BJ (cell line): ENCODE measurements at regions of chr15 and their contacts with region 1.

Region 1: DNA sequence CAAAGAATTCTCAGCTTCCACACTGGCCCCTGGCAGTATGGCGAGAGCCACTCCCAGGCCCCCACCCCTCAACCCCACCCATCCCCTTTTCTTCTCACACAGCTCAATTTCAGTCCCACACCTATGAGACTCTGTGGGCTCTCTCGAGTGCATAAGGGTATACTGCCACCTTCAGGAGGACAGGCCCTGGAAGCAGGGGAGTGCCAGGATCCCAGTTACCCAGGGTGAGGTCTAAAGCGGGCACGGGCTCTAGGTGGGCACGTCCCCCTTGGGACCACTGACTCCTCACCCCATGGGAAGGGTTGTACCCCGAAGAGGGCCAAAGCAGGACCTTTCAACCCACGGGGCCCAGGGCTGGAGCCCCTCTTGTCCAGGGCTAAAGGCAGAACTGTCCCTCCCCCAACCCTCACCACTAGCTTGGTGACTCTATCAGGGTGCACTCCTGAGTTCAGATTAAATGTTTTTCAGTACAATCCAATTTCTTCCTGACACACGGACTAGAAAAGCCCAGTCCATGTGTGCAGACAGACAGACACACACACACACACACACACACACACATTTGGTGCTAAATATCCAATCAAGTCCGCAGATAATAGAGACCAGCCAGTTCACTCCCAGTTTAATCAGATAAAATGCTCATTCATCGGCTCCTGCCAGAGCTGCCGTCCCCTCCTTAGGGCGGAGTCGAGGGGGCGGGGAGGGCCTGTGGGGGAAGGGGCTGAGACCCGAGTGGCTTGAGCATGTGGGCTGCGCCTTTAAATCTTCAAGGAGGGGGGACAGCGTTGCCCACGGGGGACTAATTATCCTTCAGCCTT is 59.4 kb downstream of the CYP11A1 start:
- DNase-seq: no peak
- H3K4me3 ChIP-seq: no peak overlapping the region
- H3K27me3 ChIP-seq: peaks cover 22% of the 10 kb centered on the region
- CTCF ChIP-seq: peak; percentile 91

Region 2: DNA sequence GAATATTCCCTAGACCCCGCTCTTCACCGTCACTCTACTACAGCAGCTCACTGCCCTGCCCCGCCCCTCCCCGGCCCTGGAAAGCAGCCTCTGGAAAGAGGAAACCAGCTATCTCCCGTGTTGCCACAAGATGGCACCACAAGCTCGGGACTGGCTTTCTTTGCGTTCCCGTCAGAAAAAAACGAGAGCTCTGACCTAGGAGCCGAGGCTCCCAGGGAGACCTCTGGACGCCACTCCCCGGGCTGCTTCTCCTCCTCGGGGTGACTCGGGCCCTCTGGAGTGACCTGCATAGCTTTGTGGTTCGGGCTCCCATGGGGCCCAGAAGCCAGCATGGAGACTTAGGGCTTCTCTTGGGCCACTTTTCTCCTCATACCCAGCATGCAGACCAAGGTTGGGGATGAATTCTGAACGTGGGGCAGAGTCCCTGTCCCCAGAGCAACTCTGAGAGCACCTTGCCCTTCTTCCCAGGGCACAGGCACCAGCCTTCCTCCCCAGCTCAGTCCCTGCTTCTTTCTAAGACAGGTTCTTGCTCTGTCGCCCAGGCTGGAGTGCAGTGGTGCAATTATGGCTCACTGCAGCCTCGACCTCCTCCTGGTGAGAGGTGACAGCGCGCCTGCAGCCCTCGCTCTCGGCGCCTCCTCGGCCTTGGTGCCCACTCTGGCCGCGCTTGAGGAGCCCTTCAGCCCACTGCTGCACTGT is 334.9 kb before region 1 on chr15:
- CTCF ChIA-PET with region 1: interaction called, 13 read pairs
- POLR2A ChIA-PET with region 1: no interaction called
- DNase-seq: no peak
- H3K4me3 ChIP-seq: no peak overlapping the region
- H3K27me3 ChIP-seq: no peaks in the 10 kb centered on the region
- CTCF ChIP-seq: peak; percentile 94

Region 3: DNA sequence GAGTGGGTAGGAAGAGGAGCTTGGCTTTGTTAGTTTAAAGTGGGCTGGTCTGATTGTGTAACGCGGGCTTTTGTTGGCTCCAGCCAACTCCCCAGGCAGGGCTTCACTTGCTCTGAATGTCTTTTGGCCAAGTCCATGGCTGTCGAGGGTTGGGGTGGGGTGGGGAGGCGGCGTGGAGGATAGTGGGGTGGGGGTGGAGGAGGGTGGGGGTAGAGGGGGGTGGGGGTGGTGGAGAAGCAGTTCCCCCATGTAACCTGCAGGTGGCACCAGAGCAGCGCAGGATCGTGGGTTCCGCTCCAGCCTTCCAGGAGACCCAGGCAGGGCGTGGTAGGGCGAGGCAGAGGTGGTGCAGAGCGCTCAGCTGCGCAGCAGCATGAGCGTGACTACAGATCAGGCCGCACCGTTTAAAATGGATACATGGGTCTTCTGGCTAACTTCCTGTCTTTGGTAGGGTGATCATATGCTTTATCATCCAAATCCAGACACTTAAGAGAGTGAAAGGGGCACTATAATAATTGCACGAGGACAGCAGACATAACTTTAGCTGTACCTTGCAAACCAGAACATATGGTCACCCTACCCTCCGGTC is 254.0 kb before region 1 on chr15:
- CTCF ChIA-PET with region 1: interaction called, 163 read pairs
- POLR2A ChIA-PET with region 1: no interaction called
- DNase-seq: peak; percentile 51
- H3K4me3 ChIP-seq: no peak overlapping the region
- H3K27me3 ChIP-seq: no peaks in the 10 kb centered on the region
- CTCF ChIP-seq: peak; percentile 76

Region 4: GRCh38 chr15:74127260-74127953 is 180.6 kb before region 1 on chr15:
- CTCF ChIA-PET with region 1: interaction called, 68 read pairs
- POLR2A ChIA-PET with region 1: interaction called, 4 read pairs
- DNase-seq: no peak
- H3K4me3 ChIP-seq: peak overlapping the region; percentile 34
- H3K27me3 ChIP-seq: peaks cover 56% of the 10 kb centered on the region
- CTCF ChIP-seq: peak; percentile 100

Region 5: GRCh38 chr15:74134387-74135027 is 173.5 kb before region 1 on chr15:
- CTCF ChIA-PET with region 1: interaction called, 68 read pairs
- POLR2A ChIA-PET with region 1: no interaction called
- DNase-seq: no peak
- H3K4me3 ChIP-seq: no peak overlapping the region
- H3K27me3 ChIP-seq: peaks cover 47% of the 10 kb centered on the region
- CTCF ChIP-seq: peak; percentile 60

Region 6: GRCh38 chr15:74185710-74186348 is 122.2 kb before region 1 on chr15:
- CTCF ChIA-PET with region 1: no interaction called
- POLR2A ChIA-PET with region 1: no interaction called
- DNase-seq: no peak
- H3K4me3 ChIP-seq: no peak overlapping the region
- H3K27me3 ChIP-seq: no peaks in the 10 kb centered on the region
- CTCF ChIP-seq: no peak

Region 7: DNA sequence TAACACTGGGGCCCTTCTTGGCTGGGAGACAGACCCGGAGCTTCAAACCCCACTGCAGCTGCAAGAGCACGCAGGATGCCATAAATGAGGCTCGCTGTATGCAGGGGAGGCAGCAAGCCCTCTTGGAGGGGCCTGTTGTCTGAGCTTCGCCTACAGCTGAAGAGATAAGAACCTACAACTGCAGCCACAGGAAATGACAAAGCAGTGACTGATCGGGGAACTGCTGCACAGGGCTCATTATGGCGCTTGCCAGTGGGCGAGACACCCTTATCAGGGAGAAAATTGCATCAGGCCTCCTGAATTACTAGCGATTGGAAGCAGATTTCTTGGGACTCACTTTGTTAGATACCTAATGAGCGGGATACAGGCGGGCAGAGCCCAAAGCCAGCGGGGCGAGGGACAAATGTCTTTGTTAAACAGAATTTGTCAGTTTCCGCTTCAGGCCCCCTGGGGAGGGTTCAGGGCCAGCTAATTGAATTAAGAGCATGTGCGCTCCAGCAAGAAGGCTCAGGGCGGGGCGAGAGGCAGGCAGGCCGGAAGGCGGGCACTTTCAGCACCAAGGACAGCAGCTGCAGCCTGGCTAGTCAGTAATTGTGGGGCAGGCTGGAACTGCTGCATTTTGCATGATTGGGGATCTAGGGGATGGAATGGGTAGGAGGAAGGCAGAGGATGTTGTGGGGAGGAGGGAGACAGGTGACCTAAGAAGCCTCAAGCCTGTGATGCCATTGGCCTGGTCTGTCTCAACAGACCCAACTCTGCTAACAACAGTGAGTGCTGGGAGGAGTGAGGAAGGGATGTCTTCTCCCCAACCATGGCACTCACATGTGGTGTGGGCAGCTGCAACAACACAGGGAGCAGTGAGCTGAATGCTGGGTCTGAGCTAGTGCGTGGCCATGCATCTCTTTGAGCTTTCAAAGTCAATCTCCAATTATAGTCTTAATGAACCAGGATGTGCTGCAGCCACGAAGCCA is 16.6 kb before region 1 on chr15:
- CTCF ChIA-PET with region 1: interaction called, 24 read pairs
- POLR2A ChIA-PET with region 1: no interaction called
- DNase-seq: no peak
- H3K4me3 ChIP-seq: no peak overlapping the region
- H3K27me3 ChIP-seq: peaks cover 5% of the 10 kb centered on the region
- CTCF ChIP-seq: no peak

Region 8: DNA sequence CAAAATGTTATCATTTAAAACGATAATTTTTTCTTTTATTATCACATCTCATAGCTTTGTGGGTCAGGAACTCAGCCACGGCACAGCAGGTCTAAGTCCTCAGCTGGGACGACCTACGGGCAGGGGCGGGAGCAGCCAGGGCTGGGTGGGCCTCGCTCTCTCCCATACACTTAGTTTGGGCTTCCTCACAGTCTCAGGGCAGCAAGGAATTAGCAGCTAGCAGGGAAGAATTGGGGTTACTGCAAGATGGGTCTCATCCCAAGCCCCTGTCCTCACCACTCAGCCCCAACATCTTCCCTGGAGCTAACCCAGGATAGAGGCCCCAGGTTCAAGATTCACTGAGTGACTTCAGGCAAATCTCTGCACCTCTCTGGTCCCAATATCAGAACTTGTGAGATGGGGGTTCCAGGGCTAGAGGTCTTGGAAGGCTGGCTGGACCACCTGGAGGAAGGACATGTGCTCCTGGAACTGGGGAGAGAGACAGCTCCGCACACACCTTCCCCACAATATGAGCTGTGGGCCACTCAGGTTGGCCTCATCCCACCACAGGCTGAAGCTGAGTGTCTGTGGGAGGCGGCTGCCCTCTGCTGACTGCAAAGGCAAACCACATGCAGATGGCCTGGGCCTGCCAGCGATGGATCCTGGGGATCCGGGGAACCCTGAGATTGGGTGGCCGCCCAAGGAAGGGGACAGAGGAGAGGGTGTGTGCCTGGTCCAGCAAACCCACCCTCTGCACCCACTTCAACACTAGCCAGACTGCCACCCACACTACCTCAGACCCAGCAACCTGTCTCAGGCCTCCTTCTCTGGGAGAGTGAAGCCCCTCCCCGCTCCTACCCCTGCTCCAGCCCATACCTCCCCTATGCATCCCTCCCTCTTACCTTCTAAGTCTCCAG is 14.4 kb after region 1 on chr15:
- CTCF ChIA-PET with region 1: interaction called, 278 read pairs
- POLR2A ChIA-PET with region 1: no interaction called
- DNase-seq: no peak
- H3K4me3 ChIP-seq: no peak overlapping the region
- H3K27me3 ChIP-seq: no peaks in the 10 kb centered on the region
- CTCF ChIP-seq: peak; percentile 93